ENCODE measurements at regions of chr11 and their contacts with region 1.

Region 1: GRCh38 chr11:57249384-57250319 is 12.6 kb upstream of the APLNR start:
- DNase-seq: no peak
- H3K4me3 ChIP-seq: no peak overlapping the region
- H3K27me3 ChIP-seq: peaks cover 2% of the 10 kb centered on the region; the same call in 1 of the 2 replicates
- CTCF ChIP-seq: peak; percentile 87

Region 2: DNA sequence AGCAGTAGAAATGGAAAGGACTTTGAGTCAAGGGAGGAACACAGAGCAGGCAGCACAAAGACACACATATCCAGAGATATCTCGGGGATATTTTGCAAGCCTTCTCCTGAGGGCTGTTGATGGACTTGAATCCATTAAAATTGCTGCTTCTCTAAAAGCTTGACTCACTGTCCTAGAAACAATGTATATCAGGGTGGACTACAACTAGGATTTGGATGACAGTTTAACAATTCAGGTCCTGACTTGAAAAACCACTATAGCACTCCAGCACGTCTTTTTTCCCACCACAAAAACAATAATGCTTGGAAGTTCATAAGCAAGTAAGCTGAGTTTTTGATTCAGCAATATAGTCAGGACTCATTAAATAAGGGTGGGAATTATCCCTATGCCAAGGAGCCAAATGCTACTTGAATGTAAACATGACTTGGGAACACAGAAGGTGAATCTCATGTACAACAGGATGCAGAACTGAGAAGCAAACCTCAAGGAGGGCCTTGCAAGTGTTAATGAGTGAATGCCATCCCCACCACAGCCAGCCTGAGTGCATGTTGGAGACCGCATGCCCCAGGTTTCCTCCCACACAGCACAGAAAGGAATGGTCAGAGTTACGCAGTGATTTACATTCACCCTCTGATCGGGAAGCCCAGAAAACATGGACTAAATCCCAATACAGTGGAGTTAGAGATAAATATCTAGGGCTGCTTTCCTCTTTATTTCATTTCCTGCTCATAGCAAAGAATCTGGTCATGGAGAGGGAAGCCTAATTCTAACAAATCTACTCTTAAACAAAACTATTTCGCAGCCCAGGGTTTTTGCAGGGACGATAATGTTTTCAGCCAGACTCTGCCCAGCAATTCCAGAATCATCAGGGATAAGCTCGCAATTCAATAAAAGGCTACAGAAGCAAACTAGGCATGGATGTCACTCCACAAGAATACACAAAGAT is 402.7 kb before region 1 on chr11:
- CTCF ChIA-PET with region 1: interaction called, 150 read pairs
- POLR2A ChIA-PET with region 1: no interaction called
- DNase-seq: no peak
- H3K4me3 ChIP-seq: no peak overlapping the region
- H3K27me3 ChIP-seq: no peaks in the 10 kb centered on the region
- CTCF ChIP-seq: no peak

Region 3: GRCh38 chr11:57095417-57095816 is 154.2 kb before region 1 on chr11:
- CTCF ChIA-PET with region 1: interaction called, 13 read pairs
- POLR2A ChIA-PET with region 1: no interaction called
- DNase-seq: no peak
- H3K4me3 ChIP-seq: no peak overlapping the region
- H3K27me3 ChIP-seq: 0 out of 2 replicates have a peak, but pooled peaks cover 2% of the 10 kb centered on the region
- CTCF ChIP-seq: no peak

Region 4: DNA sequence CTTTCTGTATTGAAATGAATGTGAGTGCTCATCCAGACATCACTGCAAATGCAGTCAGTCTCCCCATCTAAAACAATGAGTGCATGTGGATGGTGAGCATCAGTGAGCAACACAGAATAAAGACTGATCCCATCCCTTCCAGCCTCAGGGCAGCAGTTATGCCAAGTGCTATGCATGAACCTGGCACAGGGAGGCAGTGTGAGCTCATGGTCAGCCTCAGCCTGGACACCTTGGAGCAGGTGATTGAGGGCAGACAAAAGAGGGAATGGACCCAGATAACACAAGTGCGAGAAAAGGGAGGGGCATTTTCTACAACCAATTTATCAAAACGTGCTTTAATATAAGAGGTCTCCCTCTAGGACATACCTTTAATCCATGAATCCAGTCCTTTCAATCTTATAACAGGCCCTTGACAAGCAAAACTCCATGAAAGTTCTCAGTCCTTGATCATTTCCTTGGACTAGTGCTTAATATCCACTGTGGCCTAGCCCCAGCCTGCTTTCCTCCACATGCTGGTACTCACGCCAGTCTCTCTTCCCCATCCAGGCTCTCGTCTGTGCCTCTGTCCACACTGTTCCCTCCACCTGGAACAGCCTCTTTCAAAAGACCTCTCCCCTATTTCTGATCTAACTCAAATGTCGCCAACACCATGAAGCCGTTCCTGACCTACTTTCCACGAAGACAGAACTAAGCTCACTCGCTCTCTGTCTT is 118.4 kb before region 1 on chr11:
- CTCF ChIA-PET with region 1: interaction called, 72 read pairs
- POLR2A ChIA-PET with region 1: no interaction called
- DNase-seq: no peak
- H3K4me3 ChIP-seq: no peak overlapping the region
- H3K27me3 ChIP-seq: peaks cover 4% of the 10 kb centered on the region; the same call in 1 of the 2 replicates
- CTCF ChIP-seq: peak; percentile 55

Region 5: GRCh38 chr11:57205041-57205671 is 44.5 kb before region 1 on chr11:
- CTCF ChIA-PET with region 1: interaction called, 51 read pairs
- POLR2A ChIA-PET with region 1: no interaction called
- DNase-seq: peak; percentile 38
- H3K4me3 ChIP-seq: no peak overlapping the region
- H3K27me3 ChIP-seq: peaks cover 11% of the 10 kb centered on the region; the same call in 1 of the 2 replicates
- CTCF ChIP-seq: peak; percentile 54

Region 6: GRCh38 chr11:57230791-57231538 is 18.7 kb before region 1 on chr11:
- CTCF ChIA-PET with region 1: interaction called, 64 read pairs
- POLR2A ChIA-PET with region 1: no interaction called
- DNase-seq: no peak
- H3K4me3 ChIP-seq: no peak overlapping the region
- H3K27me3 ChIP-seq: peaks cover 14% of the 10 kb centered on the region
- CTCF ChIP-seq: no peak

Region 7: GRCh38 chr11:57269571-57270021 is 19.9 kb after region 1 on chr11:
- CTCF ChIA-PET with region 1: interaction called, 54 read pairs
- POLR2A ChIA-PET with region 1: no interaction called
- DNase-seq: no peak
- H3K4me3 ChIP-seq: no peak overlapping the region
- H3K27me3 ChIP-seq: 0 out of 2 replicates have a peak, but pooled peaks cover 1% of the 10 kb centered on the region
- CTCF ChIP-seq: no peak

Measured in BJ (cell line).